ENCODE measurements at regions of chr6 and their contacts with region 1.

Region 1: GRCh38 chr6:123415844-123416468 is 220.8 kb downstream of the TRDN start:
- DNase-seq: peak; percentile 37
- H3K4me3 ChIP-seq: no peak overlapping the region
- H3K27ac ChIP-seq: no peak overlapping the region
- H3K4me1 ChIP-seq: no peaks in the 10 kb centered on the region
- H3K27me3 ChIP-seq: no peaks in the 10 kb centered on the region
- CTCF ChIP-seq: peak; percentile 50

Region 2: DNA sequence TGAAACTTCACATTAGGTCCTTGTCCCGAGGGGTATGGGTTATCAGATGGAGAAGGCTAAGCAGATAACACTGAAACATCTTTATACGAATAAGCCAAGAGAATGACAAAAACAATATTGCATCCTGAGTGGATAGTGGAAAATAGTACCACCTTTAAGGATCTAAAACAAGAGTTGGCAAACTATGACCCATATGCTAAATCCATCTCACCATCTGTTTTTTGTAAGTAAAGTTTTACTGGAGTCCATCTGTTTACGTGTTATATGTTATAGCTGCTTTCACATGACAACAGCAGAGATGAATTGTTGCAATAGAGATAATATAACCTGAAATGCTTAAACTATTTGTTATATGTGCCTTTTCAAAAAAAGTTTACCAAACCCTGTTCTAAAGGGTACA is 296.9 kb after region 1 on chr6:
- intact Hi-C with region 1: loop called (anchors 5 kb)
- DNase-seq: no peak
- H3K4me3 ChIP-seq: no peak overlapping the region
- H3K27ac ChIP-seq: no peak overlapping the region
- H3K4me1 ChIP-seq: no peaks in the 10 kb centered on the region
- H3K27me3 ChIP-seq: no peaks in the 10 kb centered on the region
- CTCF ChIP-seq: no peak

Region 3: GRCh38 chr6:123869334-123869733 is 453.4 kb after region 1 on chr6:
- intact Hi-C with region 1: no loop called
- DNase-seq: no peak
- H3K4me3 ChIP-seq: no peak overlapping the region
- H3K27ac ChIP-seq: no peak overlapping the region
- H3K4me1 ChIP-seq: no peaks in the 10 kb centered on the region
- H3K27me3 ChIP-seq: no peaks in the 10 kb centered on the region
- CTCF ChIP-seq: no peak

Measured in colonic mucosa (tissue), 4 donors.